Cardiac septum (tissue), 1 donor: ENCODE measurements at regions of chr7 and their contacts with region 1.

Region 1: GRCh38 chr7:94436018-94436604 is 41.4 kb downstream of the COL1A2 start:
- DNase-seq: no peak

Region 2: GRCh38 chr7:94289071-94289470 is 147.0 kb before region 1 on chr7:
- intact Hi-C with region 1: loop called (anchors 5 kb)
- DNase-seq: no peak

Region 3: DNA sequence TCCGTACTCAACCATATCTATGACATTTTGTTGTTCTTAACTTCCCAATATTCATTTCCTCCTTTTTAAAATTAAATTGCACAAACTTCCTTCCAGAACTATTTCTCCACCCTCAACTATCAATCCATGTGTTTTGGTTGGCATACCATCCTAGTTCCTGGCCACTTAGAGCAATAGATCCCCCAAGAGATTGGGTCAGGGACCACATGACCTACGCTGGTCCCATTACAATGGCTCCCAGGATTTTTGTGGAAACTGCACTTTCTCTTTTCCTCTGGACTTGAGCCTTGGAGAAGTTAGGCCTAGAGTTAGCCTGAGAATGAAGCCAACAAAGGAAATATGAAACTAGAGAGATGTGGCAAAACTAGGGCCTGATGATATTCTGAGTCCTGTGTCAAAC is 17.8 kb after region 1 on chr7:
- intact Hi-C with region 1: no loop called
- DNase-seq: no peak

Region 4: DNA sequence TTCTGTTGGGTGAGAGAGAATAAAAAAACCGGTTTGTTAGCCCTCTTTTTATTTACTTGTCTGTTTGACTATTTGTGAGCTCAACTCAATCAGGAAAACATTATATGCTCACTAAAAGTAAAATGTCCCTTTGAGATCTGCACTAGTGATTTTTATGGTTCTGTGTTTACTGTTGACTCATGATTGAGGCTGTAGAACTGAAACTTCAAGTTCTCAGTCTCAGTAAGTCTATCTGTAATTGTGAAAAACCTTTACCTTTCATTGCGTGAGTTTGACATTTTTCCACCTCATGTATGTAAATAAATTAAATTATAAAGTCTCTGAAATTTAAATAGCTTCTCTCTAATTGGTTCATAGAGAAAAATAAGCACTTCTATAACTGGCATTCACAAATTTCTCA is 56.5 kb after region 1 on chr7:
- intact Hi-C with region 1: no loop called
- DNase-seq: no peak

Region 5: GRCh38 chr7:95126053-95126709 is 690.1 kb after region 1 on chr7:
- intact Hi-C with region 1: no loop called
- DNase-seq: no peak